Mammary epithelial cell (primary cell): ENCODE measurements at regions of chr14 and their contacts with region 1.

Region 1: DNA sequence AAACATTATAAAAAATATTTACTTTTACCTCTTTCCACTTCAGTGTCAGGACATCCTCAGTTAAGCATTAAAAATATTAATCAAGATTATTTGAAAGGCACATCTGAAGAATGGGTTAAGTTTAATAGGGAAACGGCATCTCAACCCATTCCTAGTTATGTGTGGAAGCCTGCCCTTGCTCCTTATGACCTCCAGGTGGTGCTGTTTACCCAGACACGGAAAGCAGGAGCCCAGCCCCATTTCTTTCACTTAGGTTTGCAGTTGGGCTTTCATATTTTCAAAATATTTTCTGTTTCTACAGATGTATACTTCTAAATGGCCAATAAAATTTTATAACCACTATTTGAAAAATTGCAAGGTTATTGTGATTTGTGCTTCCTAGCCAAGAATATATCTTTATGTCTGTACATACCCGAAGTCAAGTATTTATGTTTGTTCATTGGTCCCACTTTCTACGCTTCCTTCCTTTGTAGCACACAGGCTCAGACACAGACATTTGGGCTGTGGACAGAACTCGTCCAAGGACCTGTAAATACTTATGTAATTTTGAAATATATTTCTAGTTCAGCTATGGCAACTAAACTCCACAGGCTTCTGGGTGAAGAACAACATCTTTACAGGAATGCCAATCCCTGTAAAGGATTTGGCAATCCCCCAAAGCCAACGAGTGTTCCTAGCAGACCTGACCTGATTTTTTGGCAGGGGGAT is 247.1 kb downstream of the AKAP6 start:
- DNase-seq: peak; percentile 21
- H3K4me3 ChIP-seq: no peak overlapping the region
- H3K27ac ChIP-seq: no peak overlapping the region
- H3K4me1 ChIP-seq: no peaks in the 10 kb centered on the region
- H3K27me3 ChIP-seq: no peaks in the 10 kb centered on the region
- CTCF ChIP-seq: peak; percentile 91 to 96

Region 2: GRCh38 chr14:32417956-32418552 is 158.2 kb before region 1 on chr14:
- CTCF ChIA-PET with region 1: no interaction called
- dilution Hi-C with region 1: no loop called
- in situ Hi-C with region 1: no loop called
- intact Hi-C with region 1: no loop called
- DNase-seq: peak; percentile 67
- H3K4me3 ChIP-seq: no peak overlapping the region
- H3K27ac ChIP-seq: no peak overlapping the region
- H3K4me1 ChIP-seq: peaks cover 25% of the 10 kb centered on the region
- H3K27me3 ChIP-seq: no peaks in the 10 kb centered on the region
- CTCF ChIP-seq: no peak

Region 3: GRCh38 chr14:32820181-32820580 is 243.9 kb after region 1 on chr14:
- CTCF ChIA-PET with region 1: no interaction called
- dilution Hi-C with region 1: no loop called
- in situ Hi-C with region 1: no loop called
- intact Hi-C with region 1: no loop called
- DNase-seq: no peak
- H3K4me3 ChIP-seq: no peak overlapping the region
- H3K27ac ChIP-seq: no peak overlapping the region
- H3K4me1 ChIP-seq: no peaks in the 10 kb centered on the region
- H3K27me3 ChIP-seq: no peaks in the 10 kb centered on the region
- CTCF ChIP-seq: no peak

Region 4: DNA sequence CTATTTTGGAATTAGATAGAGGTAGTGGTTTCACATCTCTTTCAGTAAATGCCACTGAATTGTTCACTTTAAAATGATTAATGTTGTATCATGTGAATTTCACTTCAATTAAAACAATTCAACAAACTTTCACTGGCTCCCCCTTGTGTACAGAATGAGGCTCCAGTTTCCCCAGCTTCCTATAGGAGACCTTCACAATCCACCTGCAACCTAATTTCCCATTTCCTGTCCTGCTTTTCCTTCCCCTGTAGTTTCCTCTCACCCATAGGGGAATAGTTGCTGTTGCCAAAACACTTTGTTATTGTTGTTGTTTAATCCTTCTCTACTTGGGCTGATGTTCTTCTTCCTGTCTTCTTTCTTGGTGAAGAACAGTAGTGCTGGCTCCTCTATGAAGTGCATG is 422.2 kb after region 1 on chr14:
- CTCF ChIA-PET with region 1: no interaction called
- dilution Hi-C with region 1: no loop called
- in situ Hi-C with region 1: loop called in 1 of 2 experiments (anchors 25 kb)
- intact Hi-C with region 1: loop called (anchors 1 kb)
- DNase-seq: peak; percentile 9
- H3K4me3 ChIP-seq: no peak overlapping the region
- H3K27ac ChIP-seq: no peak overlapping the region
- H3K4me1 ChIP-seq: no peaks in the 10 kb centered on the region
- H3K27me3 ChIP-seq: no peaks in the 10 kb centered on the region
- CTCF ChIP-seq: peak; percentile 44 to 61

Region 5: DNA sequence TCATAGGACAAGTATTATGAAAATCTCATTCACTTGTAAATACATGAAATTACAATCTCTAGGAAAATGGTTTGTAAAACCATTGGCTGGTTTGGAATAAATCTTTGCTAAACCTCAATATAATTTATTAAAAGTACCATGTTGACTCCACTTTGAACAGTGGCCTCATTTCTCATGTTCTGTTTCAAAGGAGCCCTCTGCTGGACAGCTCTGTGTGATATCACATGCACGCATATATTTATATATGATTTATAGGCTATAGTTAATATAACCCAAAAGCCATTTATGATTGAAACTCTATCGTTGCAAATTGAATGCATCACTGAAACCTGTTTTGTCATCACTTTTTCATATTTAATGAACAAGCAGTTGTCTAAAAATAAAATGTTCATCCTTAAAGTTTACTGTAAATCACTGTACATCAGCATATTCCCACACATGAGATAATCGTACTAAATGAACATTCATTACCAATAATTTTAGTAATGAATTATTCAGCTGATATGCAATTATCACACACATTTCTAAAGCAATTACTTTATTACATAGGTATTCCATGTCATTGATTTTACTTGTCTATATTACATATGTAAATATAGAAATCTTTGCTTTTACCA is 856.3 kb after region 1 on chr14:
- CTCF ChIA-PET with region 1: no interaction called
- dilution Hi-C with region 1: no loop called
- in situ Hi-C with region 1: loop called (anchors 25 kb)
- intact Hi-C with region 1: loop called (anchors 2 kb)
- DNase-seq: peak; percentile 11
- H3K4me3 ChIP-seq: no peak overlapping the region
- H3K27ac ChIP-seq: no peak overlapping the region
- H3K4me1 ChIP-seq: no peaks in the 10 kb centered on the region
- H3K27me3 ChIP-seq: no peaks in the 10 kb centered on the region
- CTCF ChIP-seq: peak; percentile 39 to 61

Region 6: DNA sequence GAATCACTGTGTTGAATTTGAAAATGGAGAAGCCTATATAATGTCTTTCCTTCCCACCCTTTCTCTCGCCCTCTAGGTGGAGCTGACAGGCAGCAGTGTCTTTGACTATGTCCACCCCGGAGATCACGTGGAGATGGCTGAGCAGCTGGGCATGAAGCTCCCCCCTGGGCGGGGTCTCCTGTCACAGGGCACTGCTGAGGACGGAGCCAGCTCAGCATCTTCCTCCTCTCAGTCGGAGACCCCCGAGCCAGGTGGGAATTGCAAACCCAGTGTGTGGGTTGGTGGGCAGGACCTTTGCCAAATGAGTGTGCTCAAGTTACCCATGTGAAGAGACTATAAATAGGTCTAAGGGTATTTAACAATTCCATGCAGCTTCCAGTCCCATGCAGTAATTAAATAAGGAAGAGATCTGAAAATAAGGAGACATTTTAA is 1099.9 kb after region 1 on chr14:
- CTCF ChIA-PET with region 1: no interaction called
- dilution Hi-C with region 1: no loop called
- in situ Hi-C with region 1: no loop called
- intact Hi-C with region 1: loop called (anchors 10 kb)
- DNase-seq: peak; percentile 27
- H3K4me3 ChIP-seq: no peak overlapping the region
- H3K27ac ChIP-seq: no peak overlapping the region
- H3K4me1 ChIP-seq: peaks cover 14% of the 10 kb centered on the region
- H3K27me3 ChIP-seq: no peaks in the 10 kb centered on the region
- CTCF ChIP-seq: peak; percentile 41 to 63

Region 7: GRCh38 chr14:34227834-34228649 is 1651.8 kb after region 1 on chr14:
- CTCF ChIA-PET with region 1: no interaction called
- dilution Hi-C with region 1: no loop called
- in situ Hi-C with region 1: no loop called
- intact Hi-C with region 1: loop called (anchors 2 kb)
- DNase-seq: peak; percentile 50
- H3K4me3 ChIP-seq: peak overlapping the region in 1 of 3 experiments; percentile 13
- H3K27ac ChIP-seq: no peak overlapping the region
- H3K4me1 ChIP-seq: peaks cover 3% of the 10 kb centered on the region
- H3K27me3 ChIP-seq: no peaks in the 10 kb centered on the region
- CTCF ChIP-seq: peak; percentile 71 to 80

Region 8: DNA sequence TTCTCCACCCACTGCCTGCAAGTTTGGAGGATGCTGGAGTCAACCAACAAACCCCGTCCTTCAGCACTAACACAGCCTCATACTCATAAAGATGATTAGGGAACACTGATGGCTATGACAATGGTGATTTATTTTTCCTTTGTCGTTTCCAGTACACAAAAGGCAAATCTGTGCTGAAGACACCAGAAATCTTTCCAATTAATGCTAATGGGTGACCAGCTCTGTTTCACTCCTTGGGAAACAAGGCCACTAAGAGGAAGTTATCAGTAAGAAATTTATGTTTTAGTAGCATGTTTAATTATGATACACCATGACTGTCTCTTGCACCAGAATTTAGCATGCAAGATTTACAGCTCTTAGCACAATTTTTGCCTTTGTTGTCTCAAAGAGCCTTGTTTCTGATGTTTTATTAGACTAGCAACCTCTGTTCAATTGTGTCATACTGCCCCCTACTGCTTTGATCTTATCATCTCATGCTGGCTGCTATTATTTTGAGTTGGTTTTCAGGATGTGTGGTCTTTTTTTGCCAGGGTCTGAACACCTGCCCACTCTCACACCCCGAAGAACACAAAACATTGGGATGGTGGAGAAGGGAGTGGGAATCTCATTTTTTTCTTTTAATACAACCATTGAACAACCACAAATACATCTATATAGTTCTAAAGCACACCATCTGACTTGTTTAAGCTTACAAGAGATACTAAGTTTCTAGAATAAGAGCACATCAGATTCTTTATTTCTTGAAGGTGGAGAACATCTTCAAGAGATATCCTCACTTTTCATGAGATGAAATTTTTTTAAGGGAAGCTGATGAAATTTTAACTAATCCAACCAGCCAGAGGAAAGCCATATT is 1724.9 kb after region 1 on chr14:
- CTCF ChIA-PET with region 1: no interaction called
- dilution Hi-C with region 1: no loop called
- in situ Hi-C with region 1: loop called in 1 of 2 experiments (anchors 25 kb)
- intact Hi-C with region 1: loop called (anchors 1 kb)
- DNase-seq: peak; percentile 46
- H3K4me3 ChIP-seq: no peak overlapping the region
- H3K27ac ChIP-seq: no peak overlapping the region
- H3K4me1 ChIP-seq: peaks cover 18% of the 10 kb centered on the region
- H3K27me3 ChIP-seq: no peaks in the 10 kb centered on the region
- CTCF ChIP-seq: peak; percentile 70 to 71

Region 9: GRCh38 chr14:34322940-34323418 is 1746.7 kb after region 1 on chr14:
- CTCF ChIA-PET with region 1: no interaction called
- dilution Hi-C with region 1: no loop called
- in situ Hi-C with region 1: loop called (anchors 10 to 25 kb)
- intact Hi-C with region 1: loop called (anchors 1 kb)
- DNase-seq: peak; percentile 32
- H3K4me3 ChIP-seq: no peak overlapping the region
- H3K27ac ChIP-seq: no peak overlapping the region
- H3K4me1 ChIP-seq: no peaks in the 10 kb centered on the region
- H3K27me3 ChIP-seq: no peaks in the 10 kb centered on the region
- CTCF ChIP-seq: peak; percentile 76 to 77